ENCODE measurements at regions of chr2 and their contacts with region 1.

Region 1: DNA sequence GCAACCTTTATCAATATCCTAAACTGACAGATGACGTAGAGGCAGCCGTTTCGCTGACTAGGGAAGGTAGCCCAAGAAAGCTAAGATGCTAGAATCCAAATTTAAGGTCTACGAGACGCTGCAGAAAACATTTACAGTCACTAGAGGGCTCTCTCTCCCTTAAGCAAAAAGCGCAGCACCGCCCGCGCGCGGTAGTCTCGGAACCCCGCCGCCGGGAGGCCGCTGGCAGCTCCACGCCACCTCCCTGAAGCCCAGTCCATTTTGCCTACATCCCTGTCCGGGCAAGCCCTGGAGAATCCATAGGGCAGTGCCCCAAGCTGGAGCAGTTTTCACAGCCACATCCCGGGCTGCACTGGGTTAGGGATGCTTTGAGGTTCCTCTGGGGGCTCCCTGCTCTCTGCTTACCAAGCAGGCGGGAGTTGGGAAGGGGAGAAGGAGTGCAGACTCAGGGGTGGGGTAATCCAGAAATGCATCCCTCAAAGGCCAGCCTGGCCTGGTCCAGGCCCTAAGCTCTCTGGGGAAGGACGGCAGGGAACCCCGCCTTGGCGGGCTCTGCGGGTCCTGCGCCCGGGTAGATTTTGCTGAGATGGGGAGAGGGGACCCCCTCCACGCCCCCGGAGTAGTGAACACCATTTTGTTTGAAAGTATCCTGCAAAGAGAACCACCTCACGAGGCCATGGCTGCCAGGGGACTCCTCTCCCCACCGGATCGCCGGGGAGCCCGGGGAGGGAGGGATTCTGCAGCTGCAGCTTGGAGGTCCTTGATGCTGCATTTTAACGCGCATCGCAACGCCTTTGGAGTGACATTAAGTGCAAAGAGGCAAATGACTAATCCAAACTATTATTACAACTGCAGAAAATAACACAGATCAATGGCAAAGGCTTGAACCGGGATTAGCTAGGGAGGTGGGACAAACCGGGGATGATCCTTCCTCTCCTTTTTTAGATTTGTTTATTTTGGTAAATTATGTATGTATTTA is 1.3 kb upstream of the DPYSL5 start:
- DNase-seq: peak; percentile 86
- H3K4me3 ChIP-seq: peak overlapping the region; percentile 18 to 61; a peak in 2 of 4 replicates
- H3K27ac ChIP-seq: no peak overlapping the region
- H3K4me1 ChIP-seq: peaks cover 0 to 30% of the 10 kb centered on the region in 2 experiments; a peak in 2 of 4 replicates
- H3K27me3 ChIP-seq: peaks cover 79% of the 10 kb centered on the region
- CTCF ChIP-seq: peak; percentile 91
- EP300 ChIP-seq: no peak
- RAD21 ChIP-seq: peak; percentile 98

Region 2: DNA sequence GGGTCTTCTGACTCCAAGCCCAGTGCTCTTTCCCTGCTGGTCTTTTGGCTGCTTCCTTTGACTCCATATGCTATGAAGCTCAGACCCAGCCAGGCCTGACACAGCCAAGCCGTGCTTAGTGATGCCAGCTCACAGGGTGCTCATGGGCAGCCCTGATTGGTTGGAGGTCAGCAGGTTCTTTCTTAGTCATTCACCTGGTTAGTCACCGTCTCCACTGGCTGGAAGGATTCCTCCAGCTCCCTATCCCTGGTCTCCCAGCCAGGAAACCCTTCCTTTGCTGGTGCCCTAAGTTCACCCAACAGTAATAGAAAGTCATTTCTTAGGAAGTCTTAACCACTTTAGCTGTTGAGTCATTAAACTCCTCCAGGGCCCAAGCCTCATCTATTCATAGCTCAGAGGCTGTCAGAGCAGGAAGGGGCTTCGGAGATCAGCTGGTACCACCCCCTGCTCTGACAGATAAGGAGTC is 150.2 kb before region 1 on chr2:
- CTCF ChIA-PET with region 1: no interaction called
- POLR2A ChIA-PET with region 1: no interaction called
- DNase-seq: no peak
- H3K4me3 ChIP-seq: no peak overlapping the region
- H3K27ac ChIP-seq: peak overlapping the region in 1 of 2 experiments; percentile 36; a peak in 1 of 4 replicates
- H3K4me1 ChIP-seq: peaks cover 5 to 38% of the 10 kb centered on the region in 2 experiments; a peak in 1 of 4 replicates
- H3K27me3 ChIP-seq: peaks cover 17% of the 10 kb centered on the region
- CTCF ChIP-seq: no peak
- EP300 ChIP-seq: no peak
- RAD21 ChIP-seq: no peak

Region 3: DNA sequence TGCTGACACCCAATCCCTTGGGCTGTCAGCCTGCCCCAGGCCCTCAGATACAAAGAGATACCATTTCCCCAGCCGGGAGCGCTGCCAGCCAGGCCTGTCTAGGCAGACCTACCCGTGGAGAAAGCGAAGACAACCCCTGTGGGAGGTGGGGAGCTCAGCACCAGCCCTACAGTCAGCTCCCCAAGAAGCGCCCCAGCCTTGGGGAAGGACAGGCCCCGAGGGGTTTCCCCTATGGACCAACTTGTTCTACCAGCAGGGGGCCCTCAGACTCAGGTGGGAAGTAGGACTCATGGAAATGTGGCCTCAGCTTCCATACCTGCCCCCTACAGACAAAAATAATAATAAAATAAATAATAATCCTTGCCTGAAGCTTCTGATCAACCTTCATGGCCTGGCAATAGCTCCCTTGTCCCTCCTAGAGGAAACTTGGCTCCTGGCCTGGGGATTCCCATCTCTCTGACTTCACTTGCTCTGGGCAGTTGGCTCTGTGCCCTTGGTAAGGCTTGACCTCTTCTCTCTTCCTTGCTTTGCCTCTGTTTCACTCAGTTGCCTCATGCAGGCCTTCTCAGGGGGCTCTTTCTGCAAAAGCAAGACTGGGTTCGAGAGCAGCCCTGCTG is 75.5 kb before region 1 on chr2:
- CTCF ChIA-PET with region 1: interaction called, 15 read pairs
- POLR2A ChIA-PET with region 1: no interaction called
- DNase-seq: peak; percentile 49
- H3K4me3 ChIP-seq: no peak overlapping the region
- H3K27ac ChIP-seq: peak overlapping the region in 1 of 2 experiments; percentile 19; a peak in 1 of 4 replicates
- H3K4me1 ChIP-seq: peaks cover 20 to 28% of the 10 kb centered on the region in 2 experiments; a peak in 2 of 4 replicates
- H3K27me3 ChIP-seq: no peaks in the 10 kb centered on the region
- CTCF ChIP-seq: peak; percentile 57
- EP300 ChIP-seq: no peak
- RAD21 ChIP-seq: no peak

Region 4: GRCh38 chr2:26901326-26902183 is 54.9 kb after region 1 on chr2:
- CTCF ChIA-PET with region 1: interaction called, 779 read pairs
- POLR2A ChIA-PET with region 1: no interaction called
- DNase-seq: no peak
- H3K4me3 ChIP-seq: no peak overlapping the region
- H3K27ac ChIP-seq: no peak overlapping the region; a peak in 1 of 4 replicates
- H3K4me1 ChIP-seq: peaks cover 0 to 11% of the 10 kb centered on the region in 2 experiments; a peak in 1 of 4 replicates
- H3K27me3 ChIP-seq: peaks cover 58% of the 10 kb centered on the region
- CTCF ChIP-seq: no peak
- EP300 ChIP-seq: no peak
- RAD21 ChIP-seq: no peak

Region 5: DNA sequence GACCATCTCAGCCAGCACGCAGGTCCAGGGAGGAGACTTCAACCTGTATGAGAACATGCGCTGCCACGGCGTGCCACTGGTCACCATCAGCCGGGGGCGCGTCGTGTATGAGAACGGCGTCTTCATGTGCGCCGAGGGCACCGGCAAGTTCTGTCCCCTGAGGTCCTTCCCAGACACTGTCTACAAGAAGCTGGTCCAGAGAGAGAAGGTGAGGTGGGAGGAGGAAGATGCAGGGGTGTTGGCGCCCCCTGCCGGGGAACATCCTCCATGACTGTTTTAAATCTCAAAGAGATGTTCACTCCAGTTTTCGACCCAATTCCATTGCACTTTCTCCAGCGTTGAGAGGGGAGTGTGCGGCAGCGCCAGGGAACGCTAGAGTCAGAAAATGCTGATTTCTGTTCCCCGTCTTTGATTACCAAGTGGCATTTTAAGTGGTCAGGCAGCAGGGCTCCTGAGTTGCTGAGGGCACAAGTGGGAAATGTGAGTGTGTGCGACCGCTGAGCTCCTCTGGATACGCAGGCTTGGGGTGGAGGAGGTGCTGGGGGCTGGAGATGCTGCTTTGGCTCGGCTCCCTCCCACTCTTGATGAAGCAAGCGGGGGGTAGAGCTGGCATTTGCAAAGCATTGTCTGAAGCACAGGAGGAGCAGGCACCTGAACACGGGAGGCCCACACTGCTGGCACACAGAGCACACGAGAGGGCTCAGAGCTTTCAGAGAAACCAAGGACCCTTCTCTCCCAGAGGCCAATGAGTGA is 96.1 kb after region 1 on chr2:
- CTCF ChIA-PET with region 1: interaction called, 677 read pairs
- POLR2A ChIA-PET with region 1: interaction called, 11 read pairs
- DNase-seq: peak; percentile 90
- H3K4me3 ChIP-seq: no peak overlapping the region
- H3K27ac ChIP-seq: no peak overlapping the region
- H3K4me1 ChIP-seq: peaks cover 0 to 16% of the 10 kb centered on the region in 2 experiments; a peak in 1 of 4 replicates
- H3K27me3 ChIP-seq: peaks cover 38% of the 10 kb centered on the region; the same call in 1 of the 2 replicates
- CTCF ChIP-seq: peak; percentile 77
- EP300 ChIP-seq: no peak
- RAD21 ChIP-seq: peak; percentile 89

Region 6: DNA sequence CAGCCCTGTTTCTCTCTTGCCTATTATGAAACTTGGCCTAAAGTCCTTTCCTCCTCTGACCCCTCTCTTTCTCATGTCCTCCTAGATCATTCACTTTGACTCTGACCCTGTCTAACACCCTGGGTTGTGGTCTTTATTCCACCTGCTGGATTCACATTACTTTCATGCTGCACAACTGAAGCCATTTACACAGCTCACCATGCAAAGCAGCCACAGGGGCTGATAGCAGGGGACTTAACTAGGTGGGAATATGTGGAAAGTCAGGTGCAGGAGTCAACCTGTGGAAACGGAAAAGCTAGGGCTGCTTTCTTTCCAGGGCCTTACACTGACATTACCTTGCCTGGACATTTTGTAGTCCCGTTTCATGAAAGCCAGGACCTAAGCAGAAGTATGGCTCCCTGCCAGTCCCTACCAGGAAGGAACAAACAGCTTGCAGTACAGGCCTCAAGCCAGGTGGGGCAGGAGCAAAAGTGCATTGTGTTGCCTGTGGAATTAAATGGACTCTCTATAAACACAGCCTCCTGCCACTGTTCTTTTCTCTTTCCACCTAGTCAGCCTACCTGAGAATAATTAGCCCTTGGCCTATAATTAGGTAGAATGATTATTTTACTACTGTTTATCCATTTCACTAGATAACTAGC is 135.6 kb after region 1 on chr2:
- CTCF ChIA-PET with region 1: interaction called, 21 read pairs
- POLR2A ChIA-PET with region 1: no interaction called
- DNase-seq: peak; percentile 76
- H3K4me3 ChIP-seq: no peak overlapping the region
- H3K27ac ChIP-seq: peak overlapping the region in 1 of 2 experiments; percentile 56; a peak in 1 of 4 replicates
- H3K4me1 ChIP-seq: peaks cover 0 to 25% of the 10 kb centered on the region in 2 experiments; a peak in 1 of 4 replicates
- H3K27me3 ChIP-seq: no peaks in the 10 kb centered on the region
- CTCF ChIP-seq: peak; percentile 38; the same call in 1 of the 2 replicates
- EP300 ChIP-seq: peak in 1 of 2 experiments; percentile 24; a peak in 1 of 4 replicates
- RAD21 ChIP-seq: peak; percentile 26; the same call in 1 of the 2 replicates

Region 7: GRCh38 chr2:27016801-27017325 is 170.2 kb after region 1 on chr2:
- CTCF ChIA-PET with region 1: interaction called, 86 read pairs
- POLR2A ChIA-PET with region 1: interaction called, 4 read pairs
- DNase-seq: peak; percentile 86
- H3K4me3 ChIP-seq: no peak overlapping the region
- H3K27ac ChIP-seq: peak overlapping the region in 1 of 2 experiments; percentile 68; a peak in 1 of 4 replicates
- H3K4me1 ChIP-seq: peaks cover 17 to 21% of the 10 kb centered on the region in 2 experiments; a peak in 2 of 4 replicates
- H3K27me3 ChIP-seq: no peaks in the 10 kb centered on the region
- CTCF ChIP-seq: peak; percentile 90
- EP300 ChIP-seq: no peak
- RAD21 ChIP-seq: peak; percentile 94

Region 8: DNA sequence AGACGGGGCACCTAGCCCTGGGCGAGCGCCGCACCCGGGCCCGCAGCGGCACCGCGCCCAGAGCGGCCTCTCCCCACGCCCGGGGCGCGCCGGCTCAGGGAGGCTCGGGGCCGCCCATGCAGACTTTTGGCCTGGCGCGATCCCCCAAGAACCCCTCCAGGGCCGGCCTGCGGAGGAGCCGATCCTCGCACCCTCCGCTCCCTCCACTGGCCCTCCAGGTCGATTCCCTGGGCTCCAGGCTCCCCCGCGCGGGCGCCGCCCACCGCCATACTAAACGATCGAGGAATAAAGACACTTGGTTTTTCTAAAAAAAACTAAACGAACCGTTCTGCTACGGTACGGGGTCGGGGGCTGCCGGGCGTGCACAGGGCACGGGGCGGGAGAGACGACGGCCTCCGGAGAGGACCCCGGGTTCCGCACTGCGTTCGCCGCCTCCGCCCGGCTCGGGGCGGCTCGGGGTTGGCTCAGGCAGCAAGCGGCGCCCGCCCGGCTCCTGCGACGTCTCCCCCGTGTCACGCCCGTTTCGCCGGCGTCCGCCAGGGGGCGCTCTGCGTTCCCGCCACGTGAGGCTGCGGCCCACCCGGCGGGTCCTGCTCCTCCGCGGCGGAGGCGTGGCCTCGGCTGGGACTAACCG is 239.6 kb after region 1 on chr2:
- CTCF ChIA-PET with region 1: interaction called, 18 read pairs
- POLR2A ChIA-PET with region 1: interaction called, 3 read pairs
- DNase-seq: peak; percentile 100
- H3K4me3 ChIP-seq: peak overlapping the region; percentile 65 to 75
- H3K27ac ChIP-seq: peak overlapping the region; percentile 37 to 89; a peak in 3 of 4 replicates
- H3K4me1 ChIP-seq: peaks cover 9 to 46% of the 10 kb centered on the region in 2 experiments; a peak in 3 of 4 replicates
- H3K27me3 ChIP-seq: no peaks in the 10 kb centered on the region
- CTCF ChIP-seq: peak; percentile 69
- EP300 ChIP-seq: peak in 1 of 2 experiments; percentile 42; a peak in 1 of 4 replicates
- RAD21 ChIP-seq: peak; percentile 52